Mammary epithelial cell (primary cell): ENCODE measurements at regions of chr5 and their contacts with region 1.

Region 1: DNA sequence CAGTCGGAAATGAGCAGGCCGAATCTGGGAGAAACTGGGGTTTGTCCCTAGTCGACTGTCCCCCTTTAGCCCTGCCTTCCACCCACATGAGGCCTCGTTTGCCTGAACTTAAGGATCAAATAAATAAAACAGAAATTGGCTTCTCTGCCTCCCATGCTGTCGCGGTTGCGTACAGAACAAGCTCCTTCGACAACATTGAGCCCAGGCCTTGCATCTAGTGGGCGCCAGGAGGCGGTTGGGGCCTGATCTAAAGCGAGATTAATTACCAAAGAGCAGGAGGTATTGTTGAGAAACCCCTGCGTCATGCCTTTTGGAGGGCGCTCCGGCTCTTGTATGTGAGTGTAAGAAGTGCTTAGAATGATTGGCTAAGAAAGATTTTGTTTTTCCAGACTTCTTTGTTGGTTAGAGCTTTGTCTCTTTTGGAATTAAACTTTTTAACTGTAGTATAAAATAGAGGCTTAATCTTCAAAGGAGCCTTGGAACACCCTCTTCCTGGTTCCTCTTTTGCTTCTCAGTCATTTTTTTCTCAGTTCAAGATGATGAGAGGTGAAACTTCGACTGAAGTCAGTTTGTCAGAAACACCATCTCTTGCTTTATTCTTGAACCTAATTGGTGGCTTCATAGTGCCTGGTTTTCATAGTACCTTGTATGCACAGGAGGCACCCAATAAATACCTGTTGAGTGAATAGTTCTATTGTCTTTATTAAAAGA is 827 bp downstream of the ATP6V0E1 start:
- DNase-seq: peak; percentile 85
- H3K4me3 ChIP-seq: peak overlapping the region; percentile 58 to 92 (median 78)
- H3K27ac ChIP-seq: peak overlapping the region; percentile 91
- H3K4me1 ChIP-seq: peaks cover 11% of the 10 kb centered on the region
- H3K27me3 ChIP-seq: no peaks in the 10 kb centered on the region
- CTCF ChIP-seq: peak; percentile 43 to 72

Region 2: DNA sequence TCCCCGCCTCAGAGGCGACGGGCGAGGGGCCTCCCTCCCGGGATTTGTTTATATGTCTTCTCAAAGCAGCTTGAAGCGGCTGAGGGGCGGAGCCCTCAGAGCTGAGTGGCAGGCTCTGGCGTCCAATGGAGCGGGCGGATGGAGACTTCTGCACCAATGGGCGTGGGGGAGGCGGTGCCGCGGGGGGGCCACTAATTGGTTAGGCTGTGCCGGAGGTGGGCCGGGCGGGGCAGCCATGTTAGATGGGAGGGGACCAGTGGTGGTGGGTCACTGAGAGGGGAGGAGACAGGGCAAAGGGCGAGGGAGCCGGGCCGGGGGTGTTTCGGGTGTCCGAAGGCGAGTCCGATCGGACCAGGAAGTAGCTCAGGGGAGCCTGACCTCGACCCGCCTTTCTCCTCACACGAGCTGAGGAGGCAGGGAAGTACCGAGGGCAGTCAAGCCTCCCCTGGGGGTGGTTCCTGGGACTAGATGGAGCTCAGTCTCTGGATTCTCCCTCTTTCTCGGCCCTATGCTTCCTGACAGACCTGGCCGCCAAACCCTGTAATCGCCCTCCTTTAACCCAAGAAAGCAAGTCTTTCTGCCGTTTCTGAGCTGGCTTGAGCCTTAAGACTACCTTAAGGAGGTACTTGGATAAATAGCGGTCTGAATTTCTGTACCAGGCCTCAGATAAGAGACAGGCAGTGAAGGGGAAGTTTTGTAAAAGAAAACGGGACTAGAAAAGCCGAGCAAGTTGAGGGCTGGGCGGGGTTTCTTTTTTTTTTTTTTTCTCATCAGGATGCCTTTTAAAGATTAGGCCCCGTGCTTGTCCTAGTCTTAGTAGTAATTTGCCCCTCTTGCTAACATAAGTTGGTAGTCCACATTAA is 72.9 kb after region 1 on chr5:
- CTCF ChIA-PET with region 1: no interaction called
- dilution Hi-C with region 1: no loop called
- in situ Hi-C with region 1: no loop called
- intact Hi-C with region 1: loop called (anchors 1 kb)
- DNase-seq: peak; percentile 98
- H3K4me3 ChIP-seq: peak overlapping the region; percentile 72 to 95 (median 86)
- H3K27ac ChIP-seq: peak overlapping the region; percentile 92
- H3K4me1 ChIP-seq: peaks cover 8% of the 10 kb centered on the region
- H3K27me3 ChIP-seq: no peaks in the 10 kb centered on the region
- CTCF ChIP-seq: peak in 1 of 2 donors; percentile 26

Region 3: DNA sequence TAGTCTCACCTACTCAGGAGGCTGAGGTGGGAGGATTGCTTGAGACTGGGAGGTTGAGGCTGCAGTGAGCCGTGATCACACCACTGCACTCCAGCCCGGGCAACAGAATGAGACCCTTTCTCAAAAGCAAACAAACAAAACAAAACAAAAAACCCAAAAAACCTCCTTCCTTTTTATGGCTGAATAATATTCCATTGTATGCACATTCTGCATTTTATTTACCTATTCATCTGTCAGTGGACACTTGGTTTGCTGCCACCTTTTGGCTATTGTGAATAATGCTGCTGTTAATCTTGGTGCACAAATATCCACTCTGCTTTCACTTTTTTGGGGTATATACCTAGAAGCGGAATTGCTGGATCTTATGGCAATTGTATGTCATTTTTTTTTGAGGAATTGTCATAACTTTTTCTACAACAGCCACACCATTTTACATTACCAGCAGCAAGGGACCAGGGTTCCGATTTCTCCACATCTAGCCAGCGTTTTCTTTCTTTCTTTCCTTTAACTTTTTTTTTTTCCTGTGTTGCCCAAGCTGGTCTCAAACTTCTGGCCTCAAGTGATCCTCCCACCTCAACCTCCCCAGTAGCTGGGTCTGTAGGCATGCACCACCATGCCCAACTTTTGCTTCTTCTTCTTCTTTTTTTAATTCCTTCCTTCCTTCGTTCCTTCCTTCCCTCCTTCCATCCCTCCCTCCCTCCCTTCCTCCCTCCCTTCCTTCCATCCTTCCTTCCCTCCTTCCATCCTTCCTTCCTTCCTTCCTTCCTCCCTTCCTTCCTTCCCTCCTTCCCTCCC is 220.0 kb after region 1 on chr5:
- CTCF ChIA-PET with region 1: no interaction called
- dilution Hi-C with region 1: no loop called
- in situ Hi-C with region 1: no loop called
- intact Hi-C with region 1: loop called (anchors 1 kb)
- DNase-seq: peak; percentile 12
- H3K4me3 ChIP-seq: no peak overlapping the region
- H3K27ac ChIP-seq: no peak overlapping the region
- H3K4me1 ChIP-seq: peaks cover 11% of the 10 kb centered on the region
- H3K27me3 ChIP-seq: no peaks in the 10 kb centered on the region
- CTCF ChIP-seq: peak; percentile 45 to 66

Region 4: DNA sequence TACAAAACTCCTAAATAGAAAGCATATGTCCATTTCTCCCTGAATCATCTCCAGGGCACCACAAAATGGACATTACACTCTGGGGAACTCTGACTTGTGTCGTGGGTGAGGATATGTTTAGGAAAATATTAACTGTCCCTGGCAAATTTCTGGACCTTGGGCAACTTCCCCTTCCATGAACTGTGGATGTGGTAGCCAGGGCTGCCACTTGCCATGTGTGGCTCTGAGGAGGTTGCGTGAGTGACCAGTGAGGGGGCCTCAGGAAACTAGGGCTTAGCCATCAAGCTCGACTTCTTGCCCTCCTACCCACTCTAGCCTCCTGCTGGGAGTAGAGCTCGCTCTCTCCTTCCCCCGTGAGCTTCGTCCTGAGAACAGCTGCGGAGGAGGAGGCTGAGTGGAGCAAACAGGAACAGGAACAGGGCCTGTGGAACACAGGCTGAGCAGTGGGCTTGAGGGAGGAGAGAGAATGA is 357.6 kb after region 1 on chr5:
- CTCF ChIA-PET with region 1: no interaction called
- dilution Hi-C with region 1: no loop called
- in situ Hi-C with region 1: no loop called
- intact Hi-C with region 1: no loop called
- DNase-seq: no peak
- H3K4me3 ChIP-seq: no peak overlapping the region
- H3K27ac ChIP-seq: no peak overlapping the region
- H3K4me1 ChIP-seq: no peaks in the 10 kb centered on the region
- H3K27me3 ChIP-seq: no peaks in the 10 kb centered on the region
- CTCF ChIP-seq: no peak

Region 5: DNA sequence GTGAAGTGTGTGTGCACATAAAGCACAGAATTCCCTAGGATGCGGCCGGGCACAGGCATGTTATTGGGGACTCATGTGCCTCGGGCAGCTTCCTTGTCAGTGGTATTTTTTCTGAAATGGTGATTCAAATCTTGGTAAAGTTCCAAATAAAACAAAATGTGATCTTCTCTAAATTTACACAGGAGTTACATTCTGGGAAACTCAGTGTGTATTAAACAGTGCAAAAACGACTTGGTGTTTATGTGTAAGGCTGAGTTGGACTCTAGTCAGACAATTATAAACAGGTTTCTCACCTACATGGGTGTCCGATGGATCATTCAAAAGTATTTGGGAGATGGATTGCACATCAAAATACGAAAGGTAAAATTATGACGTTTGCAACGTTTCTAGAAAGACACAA is 583.2 kb after region 1 on chr5:
- CTCF ChIA-PET with region 1: no interaction called
- dilution Hi-C with region 1: no loop called
- in situ Hi-C with region 1: loop called in 1 of 2 experiments (anchors 25 kb)
- intact Hi-C with region 1: loop called (anchors 5 kb)
- DNase-seq: peak; percentile 70
- H3K4me3 ChIP-seq: no peak overlapping the region
- H3K27ac ChIP-seq: peak overlapping the region; percentile 36
- H3K4me1 ChIP-seq: peaks cover 23% of the 10 kb centered on the region
- H3K27me3 ChIP-seq: no peaks in the 10 kb centered on the region
- CTCF ChIP-seq: no peak

Region 6: GRCh38 chr5:173984218-173984617 is 999.8 kb after region 1 on chr5:
- CTCF ChIA-PET with region 1: no interaction called
- dilution Hi-C with region 1: no loop called
- in situ Hi-C with region 1: no loop called
- intact Hi-C with region 1: loop called (anchors 5 kb)
- DNase-seq: no peak
- H3K4me3 ChIP-seq: no peak overlapping the region
- H3K27ac ChIP-seq: no peak overlapping the region
- H3K4me1 ChIP-seq: no peaks in the 10 kb centered on the region
- H3K27me3 ChIP-seq: no peaks in the 10 kb centered on the region
- CTCF ChIP-seq: peak; percentile 35 to 54